ENCODE measurements at regions of chr7 and their contacts with region 1.

Region 1: GRCh38 chr7:127251465-127252376 is 1.0 kb downstream of the GRM8 start:
- DNase-seq: peak; percentile 36
- ATAC-seq: peak; percentile 5; the same call in 1 of the 2 replicates
- H3K4me3 Mint-ChIP-seq: peak overlapping the region; percentile 78
- H3K27ac Mint-ChIP-seq: no peak overlapping the region
- H3K4me1 Mint-ChIP-seq: peaks cover 15% of the 10 kb centered on the region
- H3K27me3 Mint-ChIP-seq: peaks cover 90% of the 10 kb centered on the region
- CTCF ChIP-seq: no peak

Region 2: GRCh38 chr7:127239814-127240213 is 11.9 kb before region 1 on chr7:
- CTCF ChIA-PET with region 1: interaction called, 21 read pairs
- POLR2A ChIA-PET with region 1: no interaction called
- DNase-seq: peak; percentile 50
- ATAC-seq: peak; percentile 90
- H3K4me3 Mint-ChIP-seq: no peak overlapping the region
- H3K27ac Mint-ChIP-seq: no peak overlapping the region
- H3K4me1 Mint-ChIP-seq: no peaks in the 10 kb centered on the region
- H3K27me3 Mint-ChIP-seq: peaks cover 6% of the 10 kb centered on the region
- CTCF ChIP-seq: peak; percentile 44; the same call in 1 of the 2 replicates

Region 3: GRCh38 chr7:127392566-127393367 is 141.0 kb after region 1 on chr7 and contains the start of gene ZNF800:
- CTCF ChIA-PET with region 1: no interaction called
- POLR2A ChIA-PET with region 1: no interaction called
- DNase-seq: peak; percentile 73
- ATAC-seq: peak; percentile 87
- H3K4me3 Mint-ChIP-seq: peak within 1 kb of the TSS; percentile 96
- H3K27ac Mint-ChIP-seq: no peak within 1 kb of the TSS
- H3K4me1 Mint-ChIP-seq: peaks cover 12% of the 10 kb centered on the region
- H3K27me3 Mint-ChIP-seq: peaks cover 62% of the 10 kb centered on the region
- CTCF ChIP-seq: no peak
- total RNA-seq, gene ZNF800: 5.7 to 7.0 TPM (median 6.2 TPM) in 3 replicates

Region 4: DNA sequence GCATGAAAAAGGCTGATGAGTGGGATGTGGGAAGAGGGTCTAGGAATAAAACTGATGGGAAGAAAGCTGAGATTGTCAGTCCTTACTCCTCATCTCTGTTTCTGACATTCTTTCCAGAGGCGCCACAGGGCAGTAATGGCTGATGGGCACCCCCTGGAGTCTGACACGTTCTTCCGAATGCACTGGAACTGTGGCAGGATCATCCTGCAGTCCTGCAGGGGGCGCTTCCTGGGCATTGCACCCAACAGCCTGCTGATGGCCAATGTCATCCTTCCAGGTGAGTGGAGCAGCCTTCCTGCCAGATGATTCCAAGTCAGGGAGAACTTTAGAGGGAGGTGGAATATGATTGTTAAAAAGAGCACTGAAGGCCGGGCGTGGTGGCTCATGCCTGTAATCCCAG is 346.6 kb after region 1 on chr7:
- CTCF ChIA-PET with region 1: no interaction called
- POLR2A ChIA-PET with region 1: no interaction called
- DNase-seq: peak; percentile 80
- ATAC-seq: peak; percentile 91
- H3K4me3 Mint-ChIP-seq: no peak overlapping the region
- H3K27ac Mint-ChIP-seq: no peak overlapping the region
- H3K4me1 Mint-ChIP-seq: peaks cover 19% of the 10 kb centered on the region
- H3K27me3 Mint-ChIP-seq: peaks cover 8% of the 10 kb centered on the region; the same call in 1 of the 2 replicates
- CTCF ChIP-seq: peak; percentile 77